ENCODE measurements at regions of chr13 and their contacts with region 1.

Region 1: GRCh38 chr13:60335531-60335930 is 61.5 kb upstream of the TDRD3 start:
- DNase-seq: no peak
- H3K4me3 ChIP-seq: no peak overlapping the region
- H3K27ac ChIP-seq: no peak overlapping the region
- H3K4me1 ChIP-seq: no peaks in the 10 kb centered on the region
- H3K27me3 ChIP-seq: no peaks in the 10 kb centered on the region
- CTCF ChIP-seq: peak; percentile 7 to 62 (median 47)

Region 2: GRCh38 chr13:60369242-60369641 is 33.7 kb after region 1 on chr13:
- intact Hi-C with region 1: no loop called
- DNase-seq: no peak
- H3K4me3 ChIP-seq: no peak overlapping the region
- H3K27ac ChIP-seq: no peak overlapping the region
- H3K4me1 ChIP-seq: no peaks in the 10 kb centered on the region
- H3K27me3 ChIP-seq: no peaks in the 10 kb centered on the region
- CTCF ChIP-seq: peak in 2 of 3 experiments; percentile 23 to 34

Region 3: DNA sequence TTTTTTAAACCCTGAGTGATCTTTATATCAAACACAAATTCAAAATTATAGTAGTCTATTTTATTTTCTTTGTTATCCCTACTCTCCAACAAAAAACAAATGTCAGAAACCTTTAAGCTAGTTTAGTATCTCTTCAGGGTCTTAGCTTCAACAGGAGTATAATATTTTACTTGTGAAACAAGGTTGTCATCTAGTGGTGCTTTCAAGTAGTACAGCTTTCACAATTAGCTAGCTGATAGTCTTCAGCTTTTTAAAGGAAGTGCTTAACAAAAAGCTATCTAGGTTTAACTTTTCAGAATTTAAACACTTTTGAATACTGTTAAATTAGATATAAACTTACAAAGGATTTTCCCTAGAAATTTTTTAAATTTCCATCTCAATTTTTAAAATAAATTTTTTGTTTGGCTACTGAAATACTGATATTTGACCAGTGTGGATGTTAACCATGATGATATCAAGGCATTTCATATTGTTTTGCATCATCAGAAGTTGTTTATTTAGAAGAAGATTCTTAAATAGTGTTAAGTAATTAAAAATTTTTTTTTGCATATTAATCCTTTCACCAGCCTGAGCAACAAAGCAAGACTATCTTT is 95.7 kb after region 1 on chr13:
- intact Hi-C with region 1: loop called (anchors 5 kb)
- DNase-seq: no peak
- H3K4me3 ChIP-seq: no peak overlapping the region
- H3K27ac ChIP-seq: no peak overlapping the region
- H3K4me1 ChIP-seq: no peaks in the 10 kb centered on the region
- H3K27me3 ChIP-seq: no peaks in the 10 kb centered on the region
- CTCF ChIP-seq: peak; percentile 68 to 91 (median 90)

Measured in ascending aorta (tissue), 2 donors.